Thyroid gland (tissue), 4 donors: ENCODE measurements at regions of chr3 and their contacts with region 1.

Region 1: GRCh38 chr3:52238761-52239701 is at the start of gene TWF2:
- DNase-seq: peak; percentile 68 to 72
- H3K4me3 ChIP-seq: peak within 1 kb of the TSS; percentile 86 to 97 (median 93)
- H3K27ac ChIP-seq: peak within 1 kb of the TSS; percentile 72 to 90 (median 84)
- H3K4me1 ChIP-seq: peaks cover 24 to 37% of the 10 kb centered on the region in 2 donors
- H3K27me3 ChIP-seq: no peaks in the 10 kb centered on the region
- CTCF ChIP-seq: peak in 5 of 6 experiments; percentile 9 to 45 (median 35)
- POLR2A ChIP-seq: peak in 1 of 2 donors; percentile 83
- total RNA-seq, gene TWF2: 28.3 to 61.1 (median 50.4) TPM

Region 2: DNA sequence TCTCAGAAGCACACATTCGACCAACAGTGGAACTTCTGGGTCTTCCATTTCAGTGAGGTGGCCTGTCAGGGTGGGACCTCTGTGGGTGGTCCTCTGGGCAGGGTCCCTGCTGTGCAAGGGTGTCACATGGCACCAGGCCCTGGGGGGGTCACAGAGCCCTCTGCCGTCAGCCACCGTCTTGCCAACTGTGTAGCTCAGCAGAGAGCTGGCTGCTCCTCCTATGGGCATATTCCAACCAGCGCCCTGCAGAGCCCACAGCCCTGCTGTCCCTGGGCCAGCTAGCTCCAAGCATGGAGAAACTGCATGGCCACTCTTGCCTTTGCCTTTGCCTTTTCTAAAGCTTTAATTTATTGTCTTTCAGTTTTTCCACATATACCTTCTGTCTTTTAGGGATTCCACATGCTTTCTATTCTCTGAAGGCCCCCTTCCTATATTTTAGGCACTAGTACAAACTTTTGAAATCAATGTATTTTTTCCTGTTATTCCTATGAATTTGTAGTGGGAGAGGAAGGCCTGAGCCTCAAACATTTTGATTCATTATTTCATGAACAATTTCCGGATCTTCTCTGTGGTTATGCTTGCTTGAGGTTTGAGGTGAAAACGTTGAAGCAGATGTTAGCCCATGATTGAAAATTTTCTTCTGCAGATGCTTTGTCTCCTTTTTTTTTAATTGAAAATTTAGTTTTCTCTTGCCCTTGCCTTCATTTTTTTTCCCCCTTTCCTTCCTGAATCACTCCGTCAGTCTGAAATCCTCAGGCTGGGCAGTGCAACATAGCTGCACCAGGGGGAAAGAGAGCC is 347.6 kb before region 1 on chr3:
- intact Hi-C with region 1: no loop called
- DNase-seq: no peak
- H3K4me3 ChIP-seq: no peak overlapping the region
- H3K27ac ChIP-seq: no peak overlapping the region
- H3K4me1 ChIP-seq: no peaks in the 10 kb centered on the region
- H3K27me3 ChIP-seq: no peaks in the 10 kb centered on the region
- CTCF ChIP-seq: no peak
- POLR2A ChIP-seq: no peak

Region 3: DNA sequence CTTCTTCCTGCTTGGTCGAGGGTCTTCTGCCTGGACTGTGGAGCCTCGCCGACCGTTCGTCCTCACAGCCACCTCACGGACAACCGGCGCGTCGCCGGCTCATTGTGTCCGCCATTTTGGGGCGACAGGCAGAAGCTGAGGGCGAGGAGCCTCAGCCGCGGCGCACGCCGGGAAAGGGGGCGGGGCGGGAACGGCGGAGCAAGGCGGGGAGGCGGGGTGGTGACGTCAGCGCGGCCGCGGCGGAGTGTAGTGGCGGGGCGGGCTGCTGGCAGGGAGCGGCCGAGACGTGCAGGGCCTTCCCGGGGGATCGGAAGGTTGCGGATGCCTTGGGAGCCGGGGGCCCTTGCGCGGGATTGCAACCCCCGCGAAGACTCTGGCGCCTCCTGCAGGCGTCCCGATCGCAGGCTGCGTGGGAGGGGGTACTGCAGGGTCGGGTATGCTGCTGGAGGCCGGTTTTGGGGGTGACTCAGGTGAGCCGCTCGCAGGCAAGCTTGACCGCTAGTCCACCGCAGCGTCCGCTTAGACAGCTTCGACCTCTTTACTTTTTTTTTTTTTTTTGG is 39.6 kb after region 1 on chr3 and contains the start of gene WDR82:
- intact Hi-C with region 1: loop called (anchors 5 kb)
- DNase-seq: peak; percentile 98
- H3K4me3 ChIP-seq: peak within 1 kb of the TSS; percentile 73 to 87 (median 85)
- H3K27ac ChIP-seq: peak within 1 kb of the TSS; percentile 98 to 99 (median 98)
- H3K4me1 ChIP-seq: peaks cover 45 to 57% of the 10 kb centered on the region in 2 donors
- H3K27me3 ChIP-seq: no peaks in the 10 kb centered on the region
- CTCF ChIP-seq: peak in 5 of 6 experiments; percentile 17 to 47 (median 33)
- POLR2A ChIP-seq: peak; percentile 29 to 94
- total RNA-seq, gene WDR82: 66.4 to 76.4 (median 72.2) TPM

Region 4: GRCh38 chr3:52291508-52292181 is 52.6 kb after region 1 on chr3:
- intact Hi-C with region 1: loop called (anchors 5 kb)
- DNase-seq: peak; percentile 20 to 22
- H3K4me3 ChIP-seq: no peak overlapping the region
- H3K27ac ChIP-seq: no peak overlapping the region
- H3K4me1 ChIP-seq: peaks cover 8 to 13% of the 10 kb centered on the region in 2 donors
- H3K27me3 ChIP-seq: no peaks in the 10 kb centered on the region
- CTCF ChIP-seq: peak in 4 of 6 experiments; percentile 26 to 55 (median 44)
- POLR2A ChIP-seq: no peak

Region 5: DNA sequence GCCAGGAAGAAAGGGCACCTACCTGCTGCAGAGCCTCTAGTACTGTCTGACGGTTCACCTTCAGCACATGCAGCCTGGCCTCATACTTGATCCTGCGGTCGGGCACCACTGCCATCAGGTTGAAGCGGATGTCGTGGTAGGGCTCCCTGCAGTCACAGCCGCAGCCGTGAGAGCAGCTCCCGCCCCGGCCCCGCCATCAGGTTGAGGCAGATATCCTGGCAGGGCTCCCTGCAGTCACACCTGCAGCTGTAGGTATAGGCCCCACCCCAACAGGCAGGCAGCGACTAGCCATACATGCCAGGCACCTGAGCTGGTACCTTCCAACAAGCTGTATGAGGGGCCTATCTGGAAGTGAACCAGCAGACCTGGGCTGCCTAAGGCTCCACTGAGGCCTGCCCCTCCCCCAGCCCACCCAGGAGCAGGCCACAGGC is 167.2 kb after region 1 on chr3:
- intact Hi-C with region 1: loop called (anchors 10 kb)
- DNase-seq: no peak
- H3K4me3 ChIP-seq: no peak overlapping the region
- H3K27ac ChIP-seq: no peak overlapping the region
- H3K4me1 ChIP-seq: peaks cover 12 to 17% of the 10 kb centered on the region in 2 donors
- H3K27me3 ChIP-seq: no peaks in the 10 kb centered on the region
- CTCF ChIP-seq: no peak
- POLR2A ChIP-seq: no peak